ENCODE measurements at regions of chr15 and their contacts with region 1.

Region 1: GRCh38 chr15:43749690-43750345 is 3.6 kb downstream of the PDIA3 start:
- DNase-seq: peak in 5 of 9 experiments; percentile 21 to 91 (median 59)
- ATAC-seq: peak; percentile 53
- H3K4me3 ChIP-seq: peak overlapping the region; percentile 52 to 53
- H3K4me3 Mint-ChIP-seq: peak overlapping the region; percentile 78
- H3K27ac ChIP-seq: peak overlapping the region; percentile 58 to 81
- H3K27ac Mint-ChIP-seq: peak overlapping the region; percentile 92
- H3K4me1 ChIP-seq: peaks cover 60% of the 10 kb centered on the region
- H3K4me1 Mint-ChIP-seq: peaks cover 62% of the 10 kb centered on the region
- H3K27me3 ChIP-seq: no peaks in the 10 kb centered on the region
- H3K27me3 Mint-ChIP-seq: no peaks in the 10 kb centered on the region
- CTCF ChIP-seq: no peak

Region 2: GRCh38 chr15:43185157-43186017 is 564.4 kb before region 1 on chr15 and contains the start of gene CCNDBP1:
- CTCF ChIA-PET with region 1: no interaction called
- POLR2A ChIA-PET with region 1: no interaction called
- intact Hi-C with region 1: loop called in 1 of 2 experiments (anchors 5 kb)
- DNase-seq: peak; percentile 73 to 93 (median 86)
- ATAC-seq: peak; percentile 75
- H3K4me3 ChIP-seq: peak within 1 kb of the TSS; percentile 82 to 97
- H3K4me3 Mint-ChIP-seq: peak within 1 kb of the TSS; percentile 97
- H3K27ac ChIP-seq: peak within 1 kb of the TSS; percentile 87 to 91
- H3K27ac Mint-ChIP-seq: peak within 1 kb of the TSS; percentile 98
- H3K4me1 ChIP-seq: peaks cover 18% of the 10 kb centered on the region
- H3K4me1 Mint-ChIP-seq: peaks cover 43% of the 10 kb centered on the region
- H3K27me3 ChIP-seq: no peaks in the 10 kb centered on the region
- H3K27me3 Mint-ChIP-seq: no peaks in the 10 kb centered on the region
- CTCF ChIP-seq: peak; percentile 56
- total RNA-seq, gene CCNDBP1: 80.3 to 81.1 TPM

Region 3: GRCh38 chr15:43492673-43493601 is 256.9 kb before region 1 on chr15 and contains the start of gene TP53BP1:
- CTCF ChIA-PET with region 1: no interaction called
- POLR2A ChIA-PET with region 1: no interaction called
- intact Hi-C with region 1: loop called (anchors 5 kb)
- DNase-seq: peak; percentile 87 to 97 (median 94)
- ATAC-seq: peak; percentile 98
- H3K4me3 ChIP-seq: peak within 1 kb of the TSS; percentile 87 to 92
- H3K4me3 Mint-ChIP-seq: peak within 1 kb of the TSS; percentile 99
- H3K27ac ChIP-seq: peak within 1 kb of the TSS; percentile 95 to 96
- H3K27ac Mint-ChIP-seq: peak within 1 kb of the TSS; percentile 98
- H3K4me1 ChIP-seq: peaks cover 24% of the 10 kb centered on the region
- H3K4me1 Mint-ChIP-seq: peaks cover 32% of the 10 kb centered on the region
- H3K27me3 ChIP-seq: no peaks in the 10 kb centered on the region
- H3K27me3 Mint-ChIP-seq: no peaks in the 10 kb centered on the region
- CTCF ChIP-seq: no peak
- total RNA-seq, gene TP53BP1: 54.6 to 59.7 TPM

Region 4: GRCh38 chr15:43769584-43770228 is 19.9 kb after region 1 on chr15:
- CTCF ChIA-PET with region 1: interaction called, 41 read pairs
- POLR2A ChIA-PET with region 1: interaction called, 3 read pairs
- intact Hi-C with region 1: loop called in 1 of 2 experiments (anchors 1 kb)
- DNase-seq: peak in 8 of 9 experiments; percentile 37 to 78 (median 66)
- ATAC-seq: peak; percentile 87
- H3K4me3 ChIP-seq: no peak overlapping the region
- H3K4me3 Mint-ChIP-seq: no peak overlapping the region
- H3K27ac ChIP-seq: no peak overlapping the region
- H3K27ac Mint-ChIP-seq: peak overlapping the region; percentile 37
- H3K4me1 ChIP-seq: no peaks in the 10 kb centered on the region
- H3K4me1 Mint-ChIP-seq: no peaks in the 10 kb centered on the region
- H3K27me3 ChIP-seq: no peaks in the 10 kb centered on the region
- H3K27me3 Mint-ChIP-seq: no peaks in the 10 kb centered on the region
- CTCF ChIP-seq: peak; percentile 89

Region 5: DNA sequence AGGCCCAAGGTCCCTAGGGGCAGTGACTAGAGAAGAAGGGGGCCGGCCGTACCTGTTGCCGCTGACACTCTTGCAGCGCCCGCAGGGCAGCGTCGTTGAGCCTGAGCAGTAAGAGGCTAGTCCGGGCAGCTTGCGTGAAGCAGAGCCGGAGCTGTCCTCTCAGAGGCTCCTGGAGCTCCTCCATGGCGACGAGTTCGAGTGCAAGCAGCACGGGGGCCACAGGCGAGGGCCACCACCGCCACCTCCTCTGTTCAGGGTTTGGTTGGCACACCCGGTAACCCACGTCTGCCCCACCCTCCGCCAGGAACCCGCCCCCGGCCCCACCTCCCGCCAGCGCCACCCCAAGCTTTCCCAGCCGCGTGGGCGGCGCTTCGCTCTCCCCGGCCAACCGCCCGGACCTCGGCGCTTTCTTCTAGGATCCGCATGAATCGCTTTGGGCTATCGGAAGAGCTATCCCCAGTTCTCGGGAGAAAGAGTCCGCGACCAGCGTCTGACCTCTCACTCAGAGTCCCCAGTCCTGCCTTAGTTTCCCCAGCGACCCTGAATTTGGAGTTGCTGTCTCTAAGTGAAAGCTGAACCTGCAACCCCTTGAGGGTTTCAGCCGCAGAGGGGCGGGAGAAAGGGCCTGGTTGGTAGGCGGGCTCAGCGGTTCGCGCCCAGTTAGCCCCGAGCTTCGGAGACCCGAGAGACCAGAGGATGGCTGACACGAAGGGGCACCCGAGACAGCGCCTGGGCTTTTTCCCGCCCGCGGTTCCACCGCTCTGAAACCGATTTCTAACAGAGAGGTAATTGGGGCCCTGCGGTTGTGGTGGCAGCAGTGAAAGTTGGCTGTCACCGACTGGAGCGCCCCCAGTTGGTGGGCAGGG is 27.1 kb after region 1 on chr15 and contains the start of gene ELL3:
- CTCF ChIA-PET with region 1: interaction called, 41 read pairs
- POLR2A ChIA-PET with region 1: interaction called, 7 read pairs
- intact Hi-C with region 1: loop called (anchors 2 kb)
- DNase-seq: peak; percentile 67 to 93 (median 82)
- ATAC-seq: peak; percentile 80
- H3K4me3 ChIP-seq: peak within 1 kb of the TSS; percentile 82 to 94
- H3K4me3 Mint-ChIP-seq: peak within 1 kb of the TSS; percentile 93
- H3K27ac ChIP-seq: peak within 1 kb of the TSS; percentile 50 to 56
- H3K27ac Mint-ChIP-seq: peak within 1 kb of the TSS; percentile 87
- H3K4me1 ChIP-seq: peaks cover 11% of the 10 kb centered on the region
- H3K4me1 Mint-ChIP-seq: peaks cover 15% of the 10 kb centered on the region
- H3K27me3 ChIP-seq: no peaks in the 10 kb centered on the region
- H3K27me3 Mint-ChIP-seq: no peaks in the 10 kb centered on the region
- CTCF ChIP-seq: peak; percentile 82
- total RNA-seq, gene ELL3: 0.67 to 1.1 TPM

Region 6: GRCh38 chr15:43791993-43792760 is 42.4 kb after region 1 on chr15 and contains the start of gene SERF2:
- CTCF ChIA-PET with region 1: no interaction called
- POLR2A ChIA-PET with region 1: interaction called, 8 read pairs
- intact Hi-C with region 1: loop called (anchors 1 kb)
- DNase-seq: peak; percentile 99 to 100 (median 99)
- ATAC-seq: peak; percentile 95
- H3K4me3 ChIP-seq: peak within 1 kb of the TSS; percentile 90 to 98
- H3K4me3 Mint-ChIP-seq: peak within 1 kb of the TSS; percentile 96
- H3K27ac ChIP-seq: peak within 1 kb of the TSS; percentile 98
- H3K27ac Mint-ChIP-seq: peak within 1 kb of the TSS; percentile 97
- H3K4me1 ChIP-seq: peaks cover 38% of the 10 kb centered on the region
- H3K4me1 Mint-ChIP-seq: peaks cover 42% of the 10 kb centered on the region
- H3K27me3 ChIP-seq: no peaks in the 10 kb centered on the region
- H3K27me3 Mint-ChIP-seq: no peaks in the 10 kb centered on the region
- CTCF ChIP-seq: no peak
- total RNA-seq, gene SERF2: 322 TPM